Dendritic cell treated with granulocyte-macrophage colony-stimulating factor and Interleukin-4, amounts not matched to agents 40 ng/mL and 50 ng/mL, for 4 days (primary cell): ENCODE measurements at regions of chr2 and their contacts with region 1.

Region 1: GRCh38 chr2:230798769-230799399 is 65.9 kb upstream of the ITM2C start:
- H3K4me3 Mint-ChIP-seq: no peak overlapping the region
- H3K27ac Mint-ChIP-seq: no peak overlapping the region
- H3K4me1 Mint-ChIP-seq: peaks cover 16% of the 10 kb centered on the region
- H3K27me3 Mint-ChIP-seq: no peaks in the 10 kb centered on the region

Region 2: GRCh38 chr2:230762317-230762896 is 36.5 kb before region 1 on chr2:
- intact Hi-C with region 1: loop called (anchors 5 kb)
- H3K4me3 Mint-ChIP-seq: no peak overlapping the region
- H3K27ac Mint-ChIP-seq: no peak overlapping the region
- H3K4me1 Mint-ChIP-seq: peaks cover 55% of the 10 kb centered on the region
- H3K27me3 Mint-ChIP-seq: no peaks in the 10 kb centered on the region